ENCODE measurements at regions of chr11 and their contacts with region 1.

Region 1: DNA sequence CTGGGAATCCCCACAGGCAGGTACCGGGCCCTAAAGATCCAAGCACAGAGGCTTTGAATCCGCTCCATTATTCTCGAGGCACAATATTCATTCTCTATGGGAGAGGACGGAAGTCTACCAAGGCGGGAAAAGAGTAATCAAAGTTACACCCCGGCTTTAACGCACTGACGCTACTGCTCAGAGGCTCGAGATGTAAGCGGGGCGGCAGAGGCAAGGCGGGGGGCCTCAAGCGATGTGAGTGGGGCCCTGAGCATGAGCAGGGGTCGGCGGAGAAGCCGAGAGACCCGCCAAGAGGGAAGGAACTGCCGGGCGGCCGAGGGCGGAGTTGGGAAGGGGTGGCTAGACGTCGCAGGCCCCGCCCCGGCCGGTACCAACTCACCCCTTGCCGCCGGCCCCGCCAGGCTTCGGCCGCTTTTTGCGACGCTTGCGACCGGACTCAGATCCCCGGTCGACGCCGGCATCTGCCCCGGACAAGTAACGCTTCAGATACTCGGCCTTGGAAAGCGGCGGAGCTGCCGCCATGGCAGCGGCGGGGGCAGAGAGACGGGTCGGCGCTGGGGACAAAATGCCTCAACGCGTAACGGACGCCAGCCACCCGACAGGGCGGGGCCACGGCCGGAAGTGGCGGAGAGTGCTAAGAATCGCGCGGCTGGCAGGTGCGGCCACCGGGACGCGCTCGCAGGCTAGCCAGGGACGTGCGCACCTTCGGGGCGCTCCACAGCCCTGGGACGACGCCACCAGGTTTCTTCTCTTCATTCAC is at the start of gene BUD13:
- DNase-seq: peak; percentile 97
- ATAC-seq: peak; percentile 91
- H3K4me3 Mint-ChIP-seq: peak within 1 kb of the TSS; percentile 95
- H3K27ac Mint-ChIP-seq: peak within 1 kb of the TSS; percentile 98
- H3K4me1 Mint-ChIP-seq: peaks cover 56% of the 10 kb centered on the region
- H3K27me3 Mint-ChIP-seq: no peaks in the 10 kb centered on the region
- total RNA-seq, gene BUD13: 30.2 to 35.6 TPM

Region 2: DNA sequence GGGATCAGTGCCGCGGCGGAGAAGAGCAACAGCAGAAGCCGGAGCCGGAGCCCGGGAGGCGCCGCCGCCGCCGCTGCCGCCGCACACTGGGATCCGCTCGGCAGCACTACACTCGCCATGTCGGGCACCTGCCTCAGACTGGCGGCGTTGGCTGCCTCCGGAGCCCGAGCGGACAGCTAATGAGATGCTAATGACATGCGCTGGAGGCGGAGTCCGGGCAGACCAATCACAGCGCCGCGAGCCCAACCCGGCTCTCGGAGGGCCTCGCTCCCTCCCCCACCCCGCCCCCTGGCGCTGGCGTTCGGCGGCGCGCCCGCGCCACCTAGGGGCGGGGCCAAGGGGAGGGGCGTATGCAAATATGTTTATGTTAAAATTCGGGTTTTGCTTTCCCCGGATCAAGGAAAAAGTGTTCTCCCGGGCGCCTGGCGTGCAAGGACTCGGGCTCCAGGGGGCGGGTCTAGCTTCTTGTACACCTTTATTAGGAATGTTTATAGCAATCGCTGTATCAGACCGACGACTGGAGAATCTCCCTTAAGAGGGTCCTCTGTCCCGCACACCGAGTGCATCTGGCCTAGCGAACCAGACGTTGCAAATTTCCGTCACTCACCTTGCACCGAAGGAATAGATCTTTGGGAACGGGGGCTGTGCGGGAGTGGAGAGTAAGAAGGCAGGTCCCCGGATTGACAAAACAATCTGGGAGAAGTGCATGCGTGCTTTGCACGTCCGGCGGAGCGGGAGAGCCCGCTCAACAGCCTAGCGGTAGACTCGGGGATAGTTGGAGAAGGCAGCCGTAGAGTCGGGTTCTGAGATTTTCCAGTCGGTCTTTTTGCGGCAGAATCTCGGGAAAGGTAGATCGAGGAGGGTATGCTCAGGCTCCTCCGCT is 1268.1 kb before region 1 on chr11 and contains the start of gene CADM1:
- CTCF ChIA-PET with region 1: no interaction called
- POLR2A ChIA-PET with region 1: no interaction called
- intact Hi-C with region 1: loop called in 1 of 2 experiments (anchors 5 kb)
- DNase-seq: peak; percentile 87
- ATAC-seq: peak; percentile 91
- H3K4me3 Mint-ChIP-seq: peak within 1 kb of the TSS; percentile 64
- H3K27ac Mint-ChIP-seq: no peak within 1 kb of the TSS
- H3K4me1 Mint-ChIP-seq: peaks cover 10% of the 10 kb centered on the region
- H3K27me3 Mint-ChIP-seq: peaks cover 28% of the 10 kb centered on the region
- total RNA-seq, gene CADM1: 0.58 to 0.91 TPM

Region 3: DNA sequence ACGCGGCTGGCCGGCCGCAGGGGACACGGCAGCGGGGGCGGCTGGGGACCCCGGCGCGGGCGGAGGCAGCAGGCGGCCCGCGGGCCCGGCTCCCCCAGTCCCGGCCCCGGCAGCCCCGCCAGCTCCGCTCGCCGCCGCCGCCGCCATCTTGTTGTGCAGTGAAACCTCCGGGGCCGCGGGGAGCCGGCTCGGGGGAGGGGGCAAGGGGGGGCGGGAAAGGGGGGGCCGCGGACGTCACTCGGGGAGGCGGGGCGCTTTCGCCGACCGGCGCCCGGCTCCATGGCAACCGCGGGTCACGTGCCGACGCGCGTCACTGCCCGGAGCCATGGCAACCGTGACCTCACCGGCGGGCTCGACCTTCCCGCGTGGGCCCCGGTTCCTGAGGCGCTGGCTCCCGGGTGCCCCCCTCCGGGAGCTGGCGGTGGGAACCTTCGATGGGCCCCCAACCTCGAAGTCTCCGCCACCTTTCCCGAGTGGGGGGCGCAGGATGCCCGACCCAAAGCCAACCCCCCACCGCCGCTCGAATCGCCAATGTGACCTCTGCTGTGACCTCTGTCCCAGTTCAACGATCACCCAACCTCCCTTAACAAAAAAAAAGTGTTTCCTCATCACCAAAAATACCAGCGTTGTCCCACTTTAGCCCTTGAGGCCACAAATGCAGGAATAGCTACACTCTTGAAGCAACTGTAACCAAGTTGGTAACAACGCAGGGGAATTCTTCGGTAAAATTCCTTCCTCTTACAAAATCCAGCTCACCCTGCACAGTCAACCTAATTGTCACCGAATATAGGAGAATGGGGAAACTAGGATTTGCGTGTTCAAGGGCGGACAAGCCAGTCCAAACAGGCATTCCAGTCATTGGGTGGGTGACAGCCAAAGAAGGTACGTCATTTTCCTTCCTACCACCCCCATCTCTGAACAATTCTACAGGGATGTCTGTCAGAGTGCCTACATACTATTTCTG is 325.9 kb after region 1 on chr11 and contains the start of gene SIK3:
- CTCF ChIA-PET with region 1: no interaction called
- POLR2A ChIA-PET with region 1: no interaction called
- intact Hi-C with region 1: loop called in 1 of 2 experiments (anchors 1 kb)
- DNase-seq: peak; percentile 96
- ATAC-seq: peak; percentile 71
- H3K4me3 Mint-ChIP-seq: peak within 1 kb of the TSS; percentile 93
- H3K27ac Mint-ChIP-seq: peak within 1 kb of the TSS; percentile 93
- H3K4me1 Mint-ChIP-seq: peaks cover 46% of the 10 kb centered on the region
- H3K27me3 Mint-ChIP-seq: no peaks in the 10 kb centered on the region
- total RNA-seq, gene SIK3: 23.6 to 25.3 TPM

Region 4: DNA sequence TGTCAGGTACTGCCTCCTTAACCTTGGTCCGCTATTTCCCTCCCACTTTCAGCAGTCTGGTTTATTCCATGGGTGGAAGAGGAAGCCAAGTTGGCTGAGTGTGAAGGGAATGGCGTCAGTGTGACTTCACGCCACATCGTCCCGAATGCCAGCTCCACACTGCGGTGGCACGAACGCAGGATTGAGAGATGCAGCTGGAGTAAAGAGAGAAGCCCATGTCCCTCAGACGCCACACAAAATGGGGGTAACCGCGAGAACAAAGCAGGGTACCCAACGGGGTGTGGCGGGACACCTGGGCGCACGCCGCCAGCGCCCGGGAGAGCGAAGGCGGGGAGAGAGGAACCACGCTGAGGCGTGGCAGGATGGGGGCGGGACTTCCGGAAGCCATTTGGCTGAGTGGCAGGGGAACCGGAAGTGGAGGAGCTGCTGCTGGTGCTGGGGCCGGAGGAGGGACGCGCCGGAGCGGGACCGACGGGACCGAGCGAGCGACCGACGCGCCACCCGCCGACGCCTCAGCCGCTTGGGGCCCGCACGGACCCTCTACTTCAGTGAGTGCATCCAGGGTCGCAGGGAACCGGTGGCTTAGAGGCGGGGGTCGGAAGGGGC is 371.4 kb after region 1 on chr11 and contains the start of gene PAFAH1B2:
- CTCF ChIA-PET with region 1: no interaction called
- POLR2A ChIA-PET with region 1: no interaction called
- intact Hi-C with region 1: loop called (anchors 1 to 5 kb)
- DNase-seq: peak; percentile 98
- ATAC-seq: peak; percentile 93
- H3K4me3 Mint-ChIP-seq: peak within 1 kb of the TSS; percentile 99
- H3K27ac Mint-ChIP-seq: peak within 1 kb of the TSS; percentile 94
- H3K4me1 Mint-ChIP-seq: peaks cover 42% of the 10 kb centered on the region
- H3K27me3 Mint-ChIP-seq: peaks cover 3% of the 10 kb centered on the region
- total RNA-seq, gene PAFAH1B2: 44.8 to 57.5 TPM

Region 5: GRCh38 chr11:117327567-117328374 is 555.1 kb after region 1 on chr11 and contains the start of gene CEP164:
- CTCF ChIA-PET with region 1: no interaction called
- POLR2A ChIA-PET with region 1: no interaction called
- intact Hi-C with region 1: loop called in 1 of 2 experiments (anchors 5 kb)
- DNase-seq: peak; percentile 96
- ATAC-seq: peak; percentile 97
- H3K4me3 Mint-ChIP-seq: no peak within 1 kb of the TSS
- H3K27ac Mint-ChIP-seq: peak within 1 kb of the TSS; percentile 73
- H3K4me1 Mint-ChIP-seq: peaks cover 13% of the 10 kb centered on the region
- H3K27me3 Mint-ChIP-seq: no peaks in the 10 kb centered on the region
- total RNA-seq, gene CEP164: 30.3 to 31.0 TPM

Region 6: GRCh38 chr11:117387992-117388755 is 615.6 kb after region 1 on chr11:
- CTCF ChIA-PET with region 1: no interaction called
- POLR2A ChIA-PET with region 1: no interaction called
- intact Hi-C with region 1: no loop called
- DNase-seq: no peak
- ATAC-seq: no peak
- H3K4me3 Mint-ChIP-seq: no peak overlapping the region
- H3K27ac Mint-ChIP-seq: no peak overlapping the region
- H3K4me1 Mint-ChIP-seq: no peaks in the 10 kb centered on the region
- H3K27me3 Mint-ChIP-seq: no peaks in the 10 kb centered on the region

Measured in activated CD4-positive, alpha-beta T cell treated with anti-CD3 and anti-CD28 coated beads for 36 hours (primary cell).